WTC11 (cell line): ENCODE measurements at regions of chrX and their contacts with region 1.

Region 1: GRCh38 chrX:9180623-9181022 is 146.7 kb upstream of the FAM9B start:
- DNase-seq: peak; percentile 41
- ATAC-seq: peak; percentile 98
- H3K4me3 Mint-ChIP-seq: no peak overlapping the region
- H3K27ac Mint-ChIP-seq: no peak overlapping the region
- H3K4me1 Mint-ChIP-seq: no peaks in the 10 kb centered on the region
- H3K27me3 Mint-ChIP-seq: no peaks in the 10 kb centered on the region
- CTCF ChIP-seq: no peak

Region 2: GRCh38 chrX:8971116-8971515 is 209.5 kb before region 1 on chrX:
- CTCF ChIA-PET with region 1: interaction called, 16 read pairs
- POLR2A ChIA-PET with region 1: no interaction called
- DNase-seq: no peak
- ATAC-seq: peak; percentile 73
- H3K4me3 Mint-ChIP-seq: no peak overlapping the region
- H3K27ac Mint-ChIP-seq: no peak overlapping the region
- H3K4me1 Mint-ChIP-seq: peaks cover 6% of the 10 kb centered on the region; the same call in 1 of the 2 replicates
- H3K27me3 Mint-ChIP-seq: no peaks in the 10 kb centered on the region
- CTCF ChIP-seq: no peak